HepG2 (cell line): ENCODE measurements at regions of chr7 and their contacts with region 1.

Region 1: DNA sequence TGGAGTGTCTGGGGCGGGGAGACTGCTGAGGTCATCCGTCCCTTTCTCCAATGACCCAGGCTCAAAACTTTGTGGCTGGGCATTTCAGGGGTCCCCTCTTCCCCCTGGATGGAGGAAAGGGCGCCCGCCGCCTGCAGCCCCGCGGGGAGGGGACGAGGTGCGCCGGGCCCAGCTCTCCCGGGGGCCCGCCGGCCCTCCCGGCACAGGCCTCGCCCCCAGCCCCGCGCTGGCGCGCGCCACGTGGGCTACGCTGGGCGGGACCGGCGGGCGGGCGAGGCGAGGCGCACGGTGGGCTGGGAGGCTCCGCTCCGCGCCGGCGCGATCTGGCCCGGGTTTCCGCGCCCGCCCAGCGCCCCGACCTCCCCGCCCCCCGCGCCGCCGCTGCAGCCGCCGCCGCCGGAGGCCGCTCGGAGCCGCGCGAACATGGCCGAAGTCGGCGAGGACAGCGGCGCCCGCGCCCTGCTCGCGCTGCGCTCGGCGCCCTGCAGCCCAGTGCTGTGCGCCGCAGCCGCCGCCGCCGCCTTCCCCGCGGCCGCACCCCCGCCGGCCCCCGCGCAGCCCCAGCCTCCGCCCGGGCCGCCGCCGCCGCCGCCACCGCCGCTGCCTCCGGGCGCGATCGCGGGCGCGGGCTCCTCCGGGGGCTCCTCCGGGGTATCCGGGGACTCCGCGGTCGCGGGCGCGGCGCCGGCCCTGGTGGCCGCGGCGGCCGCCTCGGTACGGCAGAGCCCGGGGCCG is at the start of gene FOXK1:
- DNase-seq: no peak
- ATAC-seq: peak; percentile 43
- H3K4me3 ChIP-seq: peak within 1 kb of the TSS; percentile 87 to 99 (median 90)
- H3K27ac ChIP-seq: peak within 1 kb of the TSS; percentile 71
- H3K4me1 ChIP-seq: peaks cover 37% of the 10 kb centered on the region
- H3K27me3 ChIP-seq: peaks cover 0 to 4% of the 10 kb centered on the region in 2 experiments; a peak in 1 of 5 replicates
- CTCF ChIP-seq: no peak; the same call in 1 of the 2 replicates
- EP300 ChIP-seq: no peak
- POLR2A ChIP-seq: peak in 1 of 2 experiments; percentile 53; a peak in 1 of 4 replicates
- RAD21 ChIP-seq: peak; percentile 47; the same call in 1 of the 2 replicates
- total RNA-seq, gene FOXK1: 8.8 and 9.7 TPM in 2 replicates

Region 2: GRCh38 chr7:4610768-4611467 is 71.1 kb before region 1 on chr7:
- CTCF ChIA-PET with region 1: no interaction called
- POLR2A ChIA-PET with region 1: no interaction called
- in situ Hi-C with region 1: no loop called
- intact Hi-C with region 1: loop called (anchors 2 kb)
- DNase-seq: peak; percentile 74
- ATAC-seq: peak; percentile 82
- H3K4me3 ChIP-seq: no peak overlapping the region
- H3K27ac ChIP-seq: no peak overlapping the region
- H3K4me1 ChIP-seq: peaks cover 18% of the 10 kb centered on the region
- H3K27me3 ChIP-seq: peaks cover 0 to 13% of the 10 kb centered on the region in 2 experiments; a peak in 3 of 5 replicates
- CTCF ChIP-seq: peak; percentile 84
- EP300 ChIP-seq: no peak
- POLR2A ChIP-seq: no peak
- RAD21 ChIP-seq: peak; percentile 72

Region 3: DNA sequence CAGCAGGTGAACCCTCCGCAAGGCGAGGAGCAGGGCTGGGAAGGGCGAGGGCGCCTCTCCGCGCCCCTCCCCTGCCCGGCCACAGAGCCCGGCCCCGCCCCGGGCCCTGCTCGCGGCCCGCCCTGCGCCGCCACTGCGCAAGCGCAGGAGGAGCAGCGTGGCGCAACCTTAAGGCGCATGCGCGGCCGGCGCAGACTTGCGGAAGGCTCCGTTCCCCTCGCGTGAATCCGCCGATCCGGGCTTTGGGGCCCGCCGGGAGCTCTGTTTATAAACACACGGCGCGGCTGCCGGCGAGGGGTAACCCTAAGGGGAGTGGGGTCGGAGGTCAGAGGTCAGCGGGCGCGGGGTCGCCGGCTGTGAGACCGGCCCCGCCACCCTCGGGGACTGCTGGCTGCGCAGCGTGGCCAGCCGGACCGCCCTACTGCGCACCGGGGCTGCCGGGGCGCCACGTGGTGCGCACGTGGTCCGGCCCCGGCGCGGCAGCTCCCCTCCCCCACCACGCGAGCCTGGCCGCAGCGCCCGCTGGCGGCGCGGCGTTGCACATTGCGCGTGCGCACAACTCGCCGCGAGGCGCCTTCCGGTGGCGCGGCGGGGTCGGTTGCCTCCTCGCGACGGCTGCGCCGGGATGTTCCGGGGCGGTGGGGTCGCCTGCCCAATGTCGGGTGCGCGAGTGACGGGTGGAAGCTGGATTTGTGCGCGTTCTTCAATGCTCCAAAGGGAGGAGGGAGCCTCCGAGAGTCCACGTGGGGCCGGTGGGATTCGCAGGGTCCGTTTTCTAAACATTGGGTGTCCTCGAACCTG is 40.2 kb before region 1 on chr7:
- CTCF ChIA-PET with region 1: interaction called, 5 read pairs
- POLR2A ChIA-PET with region 1: interaction called, 46 read pairs
- in situ Hi-C with region 1: loop called (anchors 5 kb)
- intact Hi-C with region 1: loop called (anchors 2 kb)
- DNase-seq: peak; percentile 86
- ATAC-seq: peak; percentile 90
- H3K4me3 ChIP-seq: peak overlapping the region; percentile 49 to 79 (median 58); a peak in 5 of 6 replicates
- H3K27ac ChIP-seq: peak overlapping the region; percentile 81
- H3K4me1 ChIP-seq: peaks cover 22% of the 10 kb centered on the region
- H3K27me3 ChIP-seq: no peaks in the 10 kb centered on the region
- CTCF ChIP-seq: peak; percentile 69
- EP300 ChIP-seq: no peak; a peak in 1 of 4 replicates
- POLR2A ChIP-seq: peak; percentile 61 to 86
- RAD21 ChIP-seq: peak; percentile 86

Region 4: GRCh38 chr7:4738711-4739527 is 56.9 kb after region 1 on chr7:
- CTCF ChIA-PET with region 1: no interaction called
- POLR2A ChIA-PET with region 1: interaction called, 3 read pairs
- in situ Hi-C with region 1: no loop called
- intact Hi-C with region 1: loop called (anchors 5 kb)
- DNase-seq: peak; percentile 77
- ATAC-seq: peak; percentile 54
- H3K4me3 ChIP-seq: peak overlapping the region; percentile 27 to 56 (median 36); a peak in 5 of 6 replicates
- H3K27ac ChIP-seq: peak overlapping the region; percentile 83
- H3K4me1 ChIP-seq: peaks cover 64% of the 10 kb centered on the region
- H3K27me3 ChIP-seq: no peaks in the 10 kb centered on the region
- CTCF ChIP-seq: peak; percentile 54
- EP300 ChIP-seq: 0 out of 4 replicates have a peak, but pooled peaks of 1 of the 2 experiments have one; percentile 8
- POLR2A ChIP-seq: peak in 1 of 2 experiments; percentile 20; a peak in 1 of 4 replicates
- RAD21 ChIP-seq: no peak

Region 5: GRCh38 chr7:4753711-4754432 is 71.8 kb after region 1 on chr7:
- CTCF ChIA-PET with region 1: no interaction called
- POLR2A ChIA-PET with region 1: no interaction called
- in situ Hi-C with region 1: loop called (anchors 5 kb)
- intact Hi-C with region 1: loop called (anchors 2 kb)
- DNase-seq: peak; percentile 58
- ATAC-seq: peak; percentile 96
- H3K4me3 ChIP-seq: no peak overlapping the region
- H3K27ac ChIP-seq: no peak overlapping the region
- H3K4me1 ChIP-seq: peaks cover 9% of the 10 kb centered on the region; the same call in 1 of the 2 replicates
- H3K27me3 ChIP-seq: no peaks in the 10 kb centered on the region
- CTCF ChIP-seq: peak; percentile 96
- EP300 ChIP-seq: no peak
- POLR2A ChIP-seq: no peak
- RAD21 ChIP-seq: peak; percentile 91